HepG2 (cell line): ENCODE measurements at regions of chr4 and their contacts with region 1.

Region 1: DNA sequence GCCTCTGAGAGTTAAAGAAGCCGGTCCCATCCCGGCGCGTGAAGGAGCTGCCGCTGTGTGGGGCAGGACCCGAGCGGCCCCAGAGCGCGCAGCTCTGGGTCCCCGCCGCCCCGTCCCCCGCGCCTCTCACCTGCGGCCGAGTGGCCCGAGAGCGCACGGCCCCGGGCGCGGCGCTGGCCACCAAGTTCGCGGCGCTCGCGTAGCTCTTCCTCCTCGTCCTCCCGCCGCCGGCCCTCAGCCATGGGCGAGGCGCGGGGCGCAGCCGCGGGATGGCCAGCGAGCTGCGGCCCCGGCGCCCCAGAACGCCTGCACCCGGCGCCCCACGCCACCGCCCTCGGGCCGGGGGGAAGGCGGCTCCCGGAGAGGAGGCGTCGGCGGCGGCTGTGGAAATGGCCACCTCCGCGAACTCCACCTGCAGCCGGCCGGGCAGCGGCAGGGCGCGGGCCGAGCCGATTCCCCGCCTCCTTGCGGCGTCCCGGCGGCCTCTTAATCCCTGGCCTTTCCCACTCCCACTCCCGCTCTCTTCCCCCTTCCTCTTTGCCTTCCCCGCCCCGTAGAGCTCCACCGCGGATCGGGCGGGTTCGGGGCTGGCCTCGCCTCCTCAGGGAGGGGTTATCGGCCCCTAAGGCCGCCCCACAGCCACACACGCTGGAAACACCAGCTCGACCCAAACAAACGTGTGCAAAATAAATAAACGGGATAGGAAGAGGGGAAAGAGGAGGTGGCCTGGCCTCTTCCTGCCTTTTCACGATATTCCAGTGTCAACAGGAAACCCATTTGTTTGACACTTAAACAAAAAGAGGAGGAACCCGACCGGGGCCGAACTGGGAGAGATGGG is at the start of gene SH3D19:
- DNase-seq: peak; percentile 99
- ATAC-seq: peak; percentile 89
- H3K4me3 ChIP-seq: peak within 1 kb of the TSS; percentile 80 to 84 (median 83)
- H3K27ac ChIP-seq: peak within 1 kb of the TSS; percentile 100
- H3K4me1 ChIP-seq: peaks cover 59% of the 10 kb centered on the region
- H3K27me3 ChIP-seq: no peaks in the 10 kb centered on the region
- CTCF ChIP-seq: no peak; the same call in 1 of the 2 replicates
- EP300 ChIP-seq: peak in 1 of 2 experiments; percentile 77; a peak in 2 of 4 replicates
- POLR2A ChIP-seq: peak; percentile 71 to 83
- RAD21 ChIP-seq: peak; percentile 27
- total RNA-seq, gene SH3D19: 31.2 and 34.4 TPM in 2 replicates

Region 2: DNA sequence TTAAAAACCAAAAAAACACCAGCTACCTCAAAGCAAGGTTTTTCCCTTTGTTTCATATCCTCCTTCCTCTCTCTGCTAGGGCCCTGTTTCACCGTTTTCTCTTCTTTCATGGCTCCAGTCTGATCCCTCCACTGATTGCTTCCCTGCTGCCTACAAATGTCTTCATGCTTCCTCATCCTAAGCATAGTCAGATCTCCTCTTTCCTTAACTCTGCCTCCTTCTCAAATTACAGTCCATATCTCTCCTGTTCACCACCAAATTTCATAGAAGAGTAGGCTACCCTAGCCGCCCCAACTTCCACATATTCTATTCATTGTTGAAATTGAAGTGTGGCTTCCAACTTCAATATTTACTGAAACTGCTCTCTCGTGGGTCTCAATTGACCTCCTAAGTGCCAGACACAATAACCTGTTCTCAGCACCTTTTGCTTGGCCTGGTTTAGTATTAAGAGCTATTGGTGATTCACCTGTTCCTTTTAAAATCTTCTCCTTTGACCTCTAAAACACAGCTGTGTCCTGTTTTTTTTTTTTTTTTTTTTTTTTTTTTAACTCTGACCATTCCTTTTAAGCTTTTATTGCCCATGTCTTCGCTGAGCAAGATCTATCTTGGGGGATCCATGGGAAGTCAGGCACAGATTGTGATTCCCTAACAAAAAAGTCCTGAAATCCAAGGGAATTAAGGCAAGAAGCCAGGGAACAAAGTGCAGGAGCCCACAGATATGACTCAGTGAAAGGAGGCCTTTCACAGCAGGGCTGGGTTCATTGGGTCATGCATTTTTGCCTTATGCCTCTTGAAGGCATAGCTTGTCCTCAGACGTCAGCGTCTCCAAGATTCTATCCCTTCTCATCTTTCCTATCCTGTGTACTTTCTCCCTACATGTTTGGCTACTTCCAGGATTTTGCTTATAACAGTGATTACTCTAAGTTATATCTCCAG is 140.5 kb before region 1 on chr4:
- CTCF ChIA-PET with region 1: no interaction called
- POLR2A ChIA-PET with region 1: no interaction called
- in situ Hi-C with region 1: no loop called
- intact Hi-C with region 1: no loop called
- DNase-seq: peak; percentile 9
- ATAC-seq: no peak; the same call in 2 of the 3 replicates
- H3K4me3 ChIP-seq: no peak overlapping the region
- H3K27ac ChIP-seq: no peak overlapping the region
- H3K4me1 ChIP-seq: peaks cover 17% of the 10 kb centered on the region
- H3K27me3 ChIP-seq: no peaks in the 10 kb centered on the region
- CTCF ChIP-seq: no peak
- EP300 ChIP-seq: no peak
- POLR2A ChIP-seq: no peak
- RAD21 ChIP-seq: no peak

Region 3: GRCh38 chr4:151204925-151205524 is 120.3 kb before region 1 on chr4:
- CTCF ChIA-PET with region 1: no interaction called
- POLR2A ChIA-PET with region 1: interaction called, 27 read pairs
- in situ Hi-C with region 1: no loop called
- intact Hi-C with region 1: no loop called
- DNase-seq: peak; percentile 97
- ATAC-seq: peak; percentile 95
- H3K4me3 ChIP-seq: peak overlapping the region in 1 of 3 experiments; percentile 30; a peak in 1 of 6 replicates
- H3K27ac ChIP-seq: peak overlapping the region; percentile 91
- H3K4me1 ChIP-seq: peaks cover 94% of the 10 kb centered on the region
- H3K27me3 ChIP-seq: no peaks in the 10 kb centered on the region
- CTCF ChIP-seq: no peak
- EP300 ChIP-seq: peak; percentile 51 to 84; a peak in 3 of 4 replicates
- POLR2A ChIP-seq: no peak
- RAD21 ChIP-seq: no peak

Region 4: GRCh38 chr4:151266497-151266896 is 58.8 kb before region 1 on chr4:
- CTCF ChIA-PET with region 1: no interaction called
- POLR2A ChIA-PET with region 1: interaction called, 32 read pairs
- in situ Hi-C with region 1: no loop called
- intact Hi-C with region 1: no loop called
- DNase-seq: no peak
- ATAC-seq: no peak
- H3K4me3 ChIP-seq: no peak overlapping the region
- H3K27ac ChIP-seq: peak overlapping the region; percentile 50
- H3K4me1 ChIP-seq: peaks cover 29% of the 10 kb centered on the region
- H3K27me3 ChIP-seq: no peaks in the 10 kb centered on the region
- CTCF ChIP-seq: no peak
- EP300 ChIP-seq: no peak
- POLR2A ChIP-seq: no peak
- RAD21 ChIP-seq: no peak

Region 5: GRCh38 chr4:151304755-151305154 is 20.6 kb before region 1 on chr4:
- CTCF ChIA-PET with region 1: no interaction called
- POLR2A ChIA-PET with region 1: interaction called, 18 read pairs
- in situ Hi-C with region 1: no loop called
- intact Hi-C with region 1: loop called (anchors 1 kb)
- DNase-seq: no peak
- ATAC-seq: peak; percentile 67
- H3K4me3 ChIP-seq: no peak overlapping the region
- H3K27ac ChIP-seq: no peak overlapping the region
- H3K4me1 ChIP-seq: peaks cover 42% of the 10 kb centered on the region
- H3K27me3 ChIP-seq: no peaks in the 10 kb centered on the region
- CTCF ChIP-seq: peak; percentile 19; the same call in 1 of the 2 replicates
- EP300 ChIP-seq: no peak
- POLR2A ChIP-seq: no peak
- RAD21 ChIP-seq: no peak

Region 6: DNA sequence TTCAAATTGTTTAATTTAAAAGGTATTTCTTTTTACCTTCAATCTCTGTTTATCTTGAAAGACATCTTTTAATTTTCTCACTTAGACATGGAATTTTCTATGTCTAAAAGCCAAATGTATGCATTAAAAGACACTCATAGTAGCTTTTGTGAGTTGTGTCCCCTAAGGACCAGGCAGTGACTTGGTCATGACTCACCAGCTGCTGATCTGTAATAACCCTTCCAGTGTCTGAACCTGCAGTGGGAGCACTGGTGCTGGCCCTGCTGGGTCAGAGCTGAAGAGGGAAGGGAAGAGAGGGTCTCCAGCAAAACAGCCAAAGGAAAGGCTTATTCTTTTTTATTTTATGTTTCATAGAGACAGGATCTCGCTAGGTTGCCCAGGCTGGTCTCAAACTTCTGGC is 31.2 kb after region 1 on chr4:
- CTCF ChIA-PET with region 1: no interaction called
- POLR2A ChIA-PET with region 1: interaction called, 11 read pairs
- in situ Hi-C with region 1: no loop called
- intact Hi-C with region 1: no loop called
- DNase-seq: no peak
- ATAC-seq: peak; percentile 48; the same call in 1 of the 3 replicates
- H3K4me3 ChIP-seq: no peak overlapping the region
- H3K27ac ChIP-seq: no peak overlapping the region
- H3K4me1 ChIP-seq: peaks cover 7% of the 10 kb centered on the region
- H3K27me3 ChIP-seq: no peaks in the 10 kb centered on the region
- CTCF ChIP-seq: no peak
- EP300 ChIP-seq: no peak
- POLR2A ChIP-seq: no peak
- RAD21 ChIP-seq: no peak

Region 7: DNA sequence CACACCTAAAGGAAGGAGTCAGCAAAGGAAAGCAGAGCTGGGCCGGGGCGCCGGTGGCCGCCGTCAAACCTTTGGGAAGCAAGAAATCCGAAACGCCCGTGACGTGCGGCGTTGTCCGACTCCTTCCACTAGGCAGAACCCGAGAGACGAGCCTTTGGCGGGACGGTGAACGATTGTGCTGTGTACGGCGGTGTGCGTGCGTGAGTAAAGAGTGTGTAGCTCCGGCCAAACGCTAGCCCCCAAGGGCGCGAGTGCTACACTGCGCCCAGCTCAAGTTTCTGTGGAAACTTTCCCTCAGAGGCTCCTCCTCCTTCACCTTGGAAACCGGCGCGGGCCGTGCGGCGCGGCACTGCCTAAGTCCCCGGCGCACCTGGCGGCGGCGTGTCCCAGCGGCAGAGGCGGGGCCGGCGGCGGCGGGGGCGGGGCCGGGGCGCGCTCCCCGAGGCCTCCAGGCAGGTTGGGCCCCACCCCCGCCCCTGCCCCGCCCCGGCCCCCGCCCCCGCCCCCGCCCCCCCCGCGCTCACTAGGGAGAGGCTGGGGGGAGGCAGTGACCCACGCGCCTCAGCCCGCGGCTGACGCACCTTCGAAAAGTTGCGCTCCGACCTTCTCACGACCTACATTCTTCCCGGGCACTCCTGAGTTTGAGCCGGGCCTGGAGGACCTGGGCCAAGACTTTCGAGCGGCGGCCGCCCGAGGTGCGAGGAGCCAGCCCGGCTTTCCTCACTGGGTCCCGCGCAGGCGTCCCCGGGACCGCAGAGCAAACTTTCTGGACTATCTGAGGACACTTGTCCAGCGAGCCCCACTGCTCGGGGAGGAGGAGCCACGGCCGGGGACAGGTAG is 83.5 kb after region 1 on chr4 and contains the start of gene FHIP1A:
- CTCF ChIA-PET with region 1: no interaction called
- POLR2A ChIA-PET with region 1: interaction called, 11 read pairs
- in situ Hi-C with region 1: no loop called
- intact Hi-C with region 1: loop called (anchors 1 kb)
- DNase-seq: peak; percentile 86
- ATAC-seq: peak; percentile 88
- H3K4me3 ChIP-seq: peak within 1 kb of the TSS; percentile 75 to 87 (median 82)
- H3K27ac ChIP-seq: peak within 1 kb of the TSS; percentile 75
- H3K4me1 ChIP-seq: peaks cover 41% of the 10 kb centered on the region
- H3K27me3 ChIP-seq: no peaks in the 10 kb centered on the region; a peak in 1 of 5 replicates
- CTCF ChIP-seq: no peak
- EP300 ChIP-seq: peak in 1 of 2 experiments; percentile 32; a peak in 1 of 4 replicates
- POLR2A ChIP-seq: peak; percentile 82 to 94
- RAD21 ChIP-seq: peak; percentile 39; the same call in 1 of the 2 replicates
- total RNA-seq, gene FHIP1A: 2.9 and 6.2 TPM in 2 replicates